ENCODE measurements at regions of chr16 and their contacts with region 1.

Region 1: GRCh38 chr16:74774203-74775116 is at the start of gene FA2H:
- DNase-seq: peak; percentile 71 to 96
- ATAC-seq: peak; percentile 96 to 98
- H3K4me3 ChIP-seq: peak within 1 kb of the TSS; percentile 87
- H3K27ac ChIP-seq: peak within 1 kb of the TSS; percentile 80 to 85
- H3K4me1 ChIP-seq: peaks cover 10% of the 10 kb centered on the region; the same call in 2 of the 3 replicates
- CTCF ChIP-seq: peak; percentile 50
- EP300 ChIP-seq: no peak
- POLR2A ChIP-seq: peak; percentile 34; the same call in 1 of the 2 replicates
- RAD21 ChIP-seq: peak in 1 of 2 experiments; percentile 44; a peak in 3 of 5 replicates
- polyA plus RNA-seq, gene FA2H: 7.1 and 11.0 TPM in 2 replicates

Region 2: GRCh38 chr16:74709441-74709877 is 65.0 kb before region 1 on chr16:
- CTCF ChIA-PET with region 1: interaction called, 14 read pairs
- POLR2A ChIA-PET with region 1: no interaction called
- DNase-seq: peak; percentile 81 to 85
- ATAC-seq: peak; percentile 98
- H3K4me3 ChIP-seq: no peak overlapping the region
- H3K27ac ChIP-seq: peak overlapping the region; percentile 22 to 53; a peak in 4 of 6 replicates
- H3K4me1 ChIP-seq: peaks cover 7% of the 10 kb centered on the region; the same call in 2 of the 3 replicates
- CTCF ChIP-seq: peak; percentile 99
- EP300 ChIP-seq: no peak
- POLR2A ChIP-seq: no peak
- RAD21 ChIP-seq: peak; percentile 99

Region 3: DNA sequence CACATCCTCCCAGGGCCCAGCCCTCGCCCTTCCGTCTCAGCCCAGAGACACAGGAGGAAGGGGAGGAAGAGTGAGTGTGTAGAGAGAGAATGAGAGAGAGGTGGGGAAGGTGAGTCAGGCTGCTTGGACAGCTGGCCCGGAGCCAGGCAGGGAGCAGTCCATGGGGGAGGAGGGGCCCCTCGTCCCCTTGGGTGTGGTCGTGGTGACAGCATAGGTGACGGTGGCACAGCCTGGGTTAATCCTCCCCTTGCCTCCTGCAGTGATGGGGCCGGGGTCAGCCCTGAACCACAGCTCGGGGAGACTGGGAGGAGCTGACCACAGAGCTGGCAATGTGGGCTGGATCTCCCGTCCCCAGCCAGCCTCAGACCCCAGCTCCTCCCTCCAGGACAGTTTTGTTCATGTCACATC is 36.3 kb before region 1 on chr16:
- CTCF ChIA-PET with region 1: interaction called, 11 read pairs
- POLR2A ChIA-PET with region 1: interaction called, 3 read pairs
- DNase-seq: peak; percentile 83 to 91
- ATAC-seq: peak; percentile 50 to 64
- H3K4me3 ChIP-seq: no peak overlapping the region
- H3K27ac ChIP-seq: peak overlapping the region; percentile 91
- H3K4me1 ChIP-seq: peaks cover 85% of the 10 kb centered on the region
- CTCF ChIP-seq: no peak
- EP300 ChIP-seq: peak; percentile 15 to 70; a peak in 2 of 5 replicates
- POLR2A ChIP-seq: no peak
- RAD21 ChIP-seq: no peak

Region 4: GRCh38 chr16:74785031-74785430 is 10.6 kb after region 1 on chr16:
- CTCF ChIA-PET with region 1: interaction called, 13 read pairs
- POLR2A ChIA-PET with region 1: no interaction called
- DNase-seq: no peak
- ATAC-seq: no peak
- H3K4me3 ChIP-seq: no peak overlapping the region
- H3K27ac ChIP-seq: no peak overlapping the region
- H3K4me1 ChIP-seq: no peaks in the 10 kb centered on the region
- CTCF ChIP-seq: no peak
- EP300 ChIP-seq: no peak
- POLR2A ChIP-seq: no peak
- RAD21 ChIP-seq: no peak

Region 5: GRCh38 chr16:74825941-74826542 is 51.6 kb after region 1 on chr16:
- CTCF ChIA-PET with region 1: no interaction called
- POLR2A ChIA-PET with region 1: no interaction called
- DNase-seq: no peak
- ATAC-seq: no peak
- H3K4me3 ChIP-seq: no peak overlapping the region
- H3K27ac ChIP-seq: no peak overlapping the region
- H3K4me1 ChIP-seq: no peaks in the 10 kb centered on the region
- CTCF ChIP-seq: no peak
- EP300 ChIP-seq: no peak
- POLR2A ChIP-seq: no peak
- RAD21 ChIP-seq: no peak